ENCODE measurements at regions of chr19 and their contacts with region 1.

Region 1: DNA sequence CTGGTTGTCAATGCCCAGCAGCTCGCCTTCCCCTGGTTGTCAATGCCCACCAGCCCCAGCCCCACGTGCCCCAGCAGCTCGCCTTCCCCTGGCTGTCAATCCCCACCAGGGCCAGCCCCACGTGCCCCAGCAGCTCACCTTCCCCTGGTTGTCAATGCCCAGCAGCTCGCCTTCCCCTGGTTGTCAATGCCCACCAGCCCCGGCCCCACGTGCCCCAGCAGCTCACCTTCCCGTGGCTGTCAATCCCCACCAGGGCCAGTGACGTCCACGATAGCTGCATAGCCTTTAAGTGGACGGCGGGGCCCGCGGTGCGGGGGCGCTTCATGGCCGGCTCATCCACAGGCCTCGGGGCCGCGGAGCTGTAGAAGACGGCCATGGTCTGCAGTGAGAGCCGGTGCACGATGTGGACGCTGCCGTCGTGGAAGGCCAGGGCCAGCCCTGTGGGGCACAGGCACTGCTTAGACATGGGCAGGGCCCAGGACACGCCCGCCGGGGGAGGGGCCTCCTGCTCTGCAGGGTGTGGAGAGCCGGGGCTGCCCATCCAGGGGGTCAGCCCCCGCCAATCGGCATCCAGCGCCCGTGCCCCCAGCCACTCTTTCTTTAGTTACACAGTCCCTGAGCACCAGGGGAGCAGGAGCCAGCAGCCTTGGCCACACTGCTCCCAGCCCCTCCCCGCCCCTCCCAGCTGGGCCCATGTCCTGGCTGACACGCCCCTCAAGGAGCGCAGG is 13.1 kb downstream of the MED16 start:
- DNase-seq: no peak
- ATAC-seq: no peak
- H3K4me3 ChIP-seq: no peak overlapping the region
- H3K27ac ChIP-seq: no peak overlapping the region
- H3K4me1 ChIP-seq: no peaks in the 10 kb centered on the region
- H3K27me3 ChIP-seq: no peaks in the 10 kb centered on the region
- CTCF ChIP-seq: no peak
- POLR2A ChIP-seq: no peak

Region 2: DNA sequence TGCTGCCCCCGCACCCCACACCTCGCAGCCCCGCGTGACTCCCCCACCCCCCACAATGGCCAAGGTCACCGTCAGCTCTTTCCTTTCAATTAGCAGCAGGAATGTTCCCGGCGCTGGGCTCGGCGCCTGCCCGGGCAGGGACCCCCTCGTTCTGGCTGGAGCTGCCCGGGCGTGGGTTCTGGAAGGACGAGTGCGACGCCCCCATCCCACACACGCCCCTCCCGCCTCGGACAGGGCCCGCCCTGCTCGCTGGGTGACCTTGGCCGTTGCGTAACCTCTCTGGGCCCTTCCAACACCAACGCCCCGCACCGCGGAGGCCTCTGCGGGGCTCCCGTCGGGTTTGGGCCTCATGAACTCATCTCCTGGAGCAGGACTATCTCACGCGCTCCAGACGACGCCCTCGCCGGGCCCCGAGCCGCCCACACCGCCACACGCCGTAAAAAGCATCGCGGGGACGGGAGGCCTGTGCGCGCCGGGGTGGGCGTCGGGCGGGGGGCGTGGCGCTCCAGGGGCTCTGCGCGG is 160.8 kb before region 1 on chr19:
- intact Hi-C with region 1: no loop called
- DNase-seq: peak in 3 of 5 donors; percentile 47 to 82 (median 61)
- ATAC-seq: peak in 3 of 4 donors; percentile 42 to 72 (median 68)
- H3K4me3 ChIP-seq: peak overlapping the region in 4 of 12 donors; percentile 15 to 23 (median 18)
- H3K27ac ChIP-seq: peak overlapping the region in 10 of 12 donors; percentile 4 to 79 (median 46)
- H3K4me1 ChIP-seq: peaks cover 0 to 39% (median 26%) of the 10 kb centered on the region in 12 donors
- H3K27me3 ChIP-seq: peaks cover 0 to 20% (median 10%) of the 10 kb centered on the region in 9 donors
- CTCF ChIP-seq: no peak
- POLR2A ChIP-seq: no peak

Region 3: DNA sequence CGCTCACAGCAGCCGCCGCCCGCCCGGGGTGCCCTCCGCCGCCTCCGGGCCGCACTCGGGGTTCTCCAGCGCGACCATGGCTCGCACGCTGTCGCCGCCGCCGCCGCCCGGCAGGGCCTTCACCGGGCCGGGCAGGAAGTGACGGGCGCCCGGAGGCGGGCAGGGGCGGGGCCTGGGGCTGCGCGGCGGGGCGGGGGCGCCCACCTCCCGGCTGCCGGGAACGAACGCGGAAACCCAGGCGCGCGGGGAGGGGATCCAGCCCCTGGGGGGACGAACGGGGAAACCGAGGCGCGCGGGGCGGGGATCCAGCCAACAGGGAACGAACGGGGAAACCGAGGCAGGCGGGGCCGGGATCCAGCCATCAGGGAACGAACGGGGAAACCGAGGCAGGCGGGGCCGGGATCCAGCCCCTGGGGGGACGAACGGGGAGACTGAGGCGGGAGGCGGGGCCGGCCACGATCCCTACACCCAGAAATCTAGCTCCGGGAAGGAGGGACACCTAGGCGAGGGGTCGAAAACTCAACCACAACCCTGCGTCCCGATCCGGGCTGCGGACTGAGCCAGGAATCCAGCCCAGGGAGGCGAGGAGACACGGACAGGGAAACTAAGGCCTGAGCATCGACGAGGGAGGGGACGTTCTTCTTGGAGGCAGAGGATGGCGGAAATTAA is 33.3 kb after region 1 on chr19 and contains the start of gene R3HDM4:
- intact Hi-C with region 1: loop called in 1 of 10 experiments (anchors 5 kb)
- DNase-seq: peak; percentile 84 to 93 (median 87)
- ATAC-seq: peak; percentile 79 to 95 (median 90)
- H3K4me3 ChIP-seq: peak within 1 kb of the TSS; percentile 72 to 99 (median 88)
- H3K27ac ChIP-seq: peak within 1 kb of the TSS in 11 of 12 donors; percentile 80 to 97 (median 92)
- H3K4me1 ChIP-seq: peaks cover 7 to 56% (median 19%) of the 10 kb centered on the region in 12 donors
- H3K27me3 ChIP-seq: peaks cover 13 to 23% (median 18%) of the 10 kb centered on the region in 9 donors
- CTCF ChIP-seq: no peak
- POLR2A ChIP-seq: peak in 1 of 2 donors; percentile 51
- total RNA-seq, gene R3HDM4: 17.1 to 35.5 (median 23.8) TPM

Measured in heart left ventricle (tissue), 16 donors.